A549 (cell line): ENCODE measurements at regions of chr12 and their contacts with region 1.

Region 1: GRCh38 chr12:52156736-52157565 is 34.9 kb downstream of the KRT80 start:
- DNase-seq: peak; percentile 81 to 88
- ATAC-seq: peak; percentile 72 to 78
- H3K4me3 ChIP-seq: no peak overlapping the region
- H3K27ac ChIP-seq: peak overlapping the region; percentile 100
- H3K4me1 ChIP-seq: peaks cover 63% of the 10 kb centered on the region
- CTCF ChIP-seq: peak; percentile 97
- EP300 ChIP-seq: no peak
- POLR2A ChIP-seq: no peak
- RAD21 ChIP-seq: peak; percentile 99 to 100

Region 2: GRCh38 chr12:52221912-52222457 is 65.0 kb after region 1 on chr12:
- CTCF ChIA-PET with region 1: interaction called, 12 read pairs
- POLR2A ChIA-PET with region 1: no interaction called
- DNase-seq: peak in 1 of 2 experiments; percentile 90
- ATAC-seq: peak; percentile 91 to 97
- H3K4me3 ChIP-seq: no peak overlapping the region
- H3K27ac ChIP-seq: peak overlapping the region; percentile 82 to 90
- H3K4me1 ChIP-seq: peaks cover 62% of the 10 kb centered on the region
- CTCF ChIP-seq: peak; percentile 82
- EP300 ChIP-seq: no peak
- POLR2A ChIP-seq: no peak
- RAD21 ChIP-seq: peak; percentile 64 to 67

Region 3: GRCh38 chr12:52235822-52236692 is 79.1 kb after region 1 on chr12:
- CTCF ChIA-PET with region 1: interaction called, 44 read pairs
- POLR2A ChIA-PET with region 1: no interaction called
- DNase-seq: peak in 1 of 2 experiments; percentile 24
- ATAC-seq: no peak
- H3K4me3 ChIP-seq: peak overlapping the region; percentile 93
- H3K27ac ChIP-seq: peak overlapping the region; percentile 97
- H3K4me1 ChIP-seq: peaks cover 73% of the 10 kb centered on the region
- CTCF ChIP-seq: no peak
- EP300 ChIP-seq: no peak
- POLR2A ChIP-seq: no peak
- RAD21 ChIP-seq: no peak

Region 4: DNA sequence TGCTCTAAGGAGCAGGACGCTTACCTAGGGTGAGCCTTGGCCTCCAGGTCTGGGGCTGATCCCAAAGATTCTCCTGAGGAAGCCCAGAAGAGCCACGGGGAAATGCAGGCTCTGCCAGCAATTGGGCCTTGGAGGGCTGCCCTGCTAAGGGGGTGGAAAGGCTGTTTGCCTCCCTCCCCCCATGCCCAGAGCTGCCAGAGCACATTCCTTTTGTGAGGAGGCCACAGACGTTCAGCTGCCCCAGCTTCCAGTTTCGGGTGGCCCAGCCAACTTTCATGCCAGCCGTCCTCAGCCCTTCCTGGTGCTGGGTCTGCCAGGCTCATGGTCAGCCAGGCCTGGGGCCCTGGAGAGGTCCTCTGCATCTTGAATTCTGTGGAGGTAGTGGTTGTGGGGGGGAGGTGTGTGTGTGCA is 92.1 kb after region 1 on chr12:
- CTCF ChIA-PET with region 1: interaction called, 33 read pairs
- POLR2A ChIA-PET with region 1: interaction called, 7 read pairs
- DNase-seq: peak in 1 of 2 experiments; percentile 71
- ATAC-seq: peak; percentile 0; a peak in 2 of 6 replicates
- H3K4me3 ChIP-seq: no peak overlapping the region
- H3K27ac ChIP-seq: peak overlapping the region; percentile 92 to 97
- H3K4me1 ChIP-seq: peaks cover 96% of the 10 kb centered on the region
- CTCF ChIP-seq: no peak
- EP300 ChIP-seq: no peak
- POLR2A ChIP-seq: no peak; the same call in 1 of the 2 replicates
- RAD21 ChIP-seq: 0 out of 5 replicates have a peak, but pooled peaks of 1 of the 2 experiments have one; percentile 2

Region 5: DNA sequence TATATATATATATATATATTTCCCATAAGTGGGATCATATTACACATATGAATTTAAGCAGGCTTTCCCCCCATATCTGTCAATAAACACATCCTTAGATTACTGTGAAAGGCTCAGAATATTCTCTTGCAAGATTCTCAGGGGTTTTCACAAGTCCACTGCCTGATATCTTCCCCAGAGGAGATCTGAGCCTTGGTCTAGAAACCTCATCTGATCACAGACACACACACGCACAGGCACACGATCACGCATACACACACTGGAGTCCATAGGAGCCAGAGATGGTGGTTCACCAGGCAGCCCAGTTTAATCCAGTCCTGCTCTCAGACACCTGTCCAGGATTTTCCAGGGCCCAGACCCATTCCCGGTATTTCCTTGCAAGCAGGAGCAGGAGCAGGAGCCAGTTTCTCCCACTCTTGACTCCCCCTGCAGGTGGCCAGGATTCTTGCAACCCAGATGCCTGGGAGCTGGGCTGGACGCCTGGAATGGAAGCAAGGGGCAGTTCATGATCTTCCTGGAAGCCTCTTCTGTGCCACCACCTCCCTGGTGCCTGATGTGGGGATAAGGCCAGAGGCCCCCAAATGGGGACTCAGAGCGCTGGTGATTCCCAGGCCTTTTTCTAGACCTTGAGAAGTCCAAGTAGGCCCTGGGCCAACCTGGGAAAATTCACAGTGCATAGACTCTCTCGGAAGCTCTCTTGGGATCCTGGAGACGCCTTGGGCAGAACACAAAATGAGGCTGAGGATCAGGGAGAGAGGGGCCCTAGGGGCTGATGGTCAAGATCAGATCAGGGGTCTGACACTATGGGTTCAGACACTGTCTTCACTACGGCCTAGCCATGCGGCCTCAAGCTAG is 708.4 kb after region 1 on chr12:
- CTCF ChIA-PET with region 1: interaction called, 833 read pairs
- POLR2A ChIA-PET with region 1: interaction called, 3 read pairs
- DNase-seq: peak; percentile 92 to 94
- ATAC-seq: peak; percentile 79 to 86
- H3K4me3 ChIP-seq: no peak overlapping the region
- H3K27ac ChIP-seq: peak overlapping the region; percentile 61 to 73
- H3K4me1 ChIP-seq: peaks cover 41% of the 10 kb centered on the region
- CTCF ChIP-seq: peak; percentile 77
- EP300 ChIP-seq: no peak
- POLR2A ChIP-seq: no peak
- RAD21 ChIP-seq: peak; percentile 91 to 96